Ovary (tissue), 10 donors: ENCODE measurements at regions of chr7 and their contacts with region 1.

Region 1: DNA sequence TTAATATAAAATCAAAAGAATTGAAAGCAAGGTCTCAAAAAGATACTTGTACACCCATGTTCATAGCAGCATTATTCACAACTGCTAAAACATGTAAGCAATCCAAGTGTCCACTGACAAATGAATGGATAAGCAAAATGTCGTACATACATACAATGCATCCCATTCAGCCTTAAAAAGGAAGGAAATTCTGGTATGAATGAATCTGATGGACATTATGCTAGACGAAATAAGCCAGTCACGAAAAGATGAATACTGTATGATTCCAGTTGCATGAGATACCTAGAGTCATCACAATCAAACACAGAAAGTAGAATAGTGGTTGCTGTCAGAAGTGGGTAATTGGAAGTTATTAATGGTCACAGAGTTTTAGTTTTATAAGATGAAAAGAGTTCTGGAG is 9.5 kb upstream of the TAC1 start:
- DNase-seq: no peak
- H3K4me3 ChIP-seq: no peak overlapping the region
- H3K27ac ChIP-seq: no peak overlapping the region
- H3K4me1 ChIP-seq: no peaks in the 10 kb centered on the region
- H3K27me3 ChIP-seq: no peaks in the 10 kb centered on the region
- CTCF ChIP-seq: no peak
- EP300 ChIP-seq: no peak
- POLR2A ChIP-seq: no peak

Region 2: DNA sequence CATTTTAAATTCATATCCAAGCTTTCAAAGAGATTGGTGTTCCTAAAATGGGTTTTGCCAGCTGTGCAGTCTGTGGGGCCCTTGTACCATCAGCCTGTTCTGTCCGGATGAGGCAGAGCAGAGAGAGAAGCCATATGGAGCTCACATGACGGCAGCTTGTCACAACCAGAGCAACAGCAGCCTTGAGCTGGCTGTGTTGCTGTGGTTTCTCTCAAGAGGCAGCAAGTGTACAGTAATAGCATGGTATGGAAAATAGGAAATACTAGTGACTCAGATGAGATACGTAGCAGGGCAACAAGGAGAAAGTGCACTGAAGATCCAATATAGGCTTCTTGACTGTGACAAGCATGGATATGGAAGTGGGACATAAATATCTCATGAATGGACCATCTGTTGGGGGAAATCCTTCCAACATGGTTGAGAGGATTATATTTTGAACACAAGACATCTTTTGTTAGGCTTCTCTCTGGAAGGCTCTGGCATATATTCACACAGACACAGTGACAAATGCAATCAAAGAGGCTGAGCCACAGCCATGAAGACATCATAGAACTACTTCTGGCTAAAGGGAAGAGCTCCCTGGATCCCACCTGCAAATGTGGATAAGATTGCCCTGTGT is 241.5 kb before region 1 on chr7:
- intact Hi-C with region 1: loop called in 1 of 4 experiments (anchors 5 kb)
- DNase-seq: no peak
- H3K4me3 ChIP-seq: no peak overlapping the region
- H3K27ac ChIP-seq: no peak overlapping the region
- H3K4me1 ChIP-seq: no peaks in the 10 kb centered on the region
- H3K27me3 ChIP-seq: no peaks in the 10 kb centered on the region
- CTCF ChIP-seq: no peak
- EP300 ChIP-seq: no peak
- POLR2A ChIP-seq: no peak